Panc1 (cell line): ENCODE measurements at regions of chr5 and their contacts with region 1.

Region 1: DNA sequence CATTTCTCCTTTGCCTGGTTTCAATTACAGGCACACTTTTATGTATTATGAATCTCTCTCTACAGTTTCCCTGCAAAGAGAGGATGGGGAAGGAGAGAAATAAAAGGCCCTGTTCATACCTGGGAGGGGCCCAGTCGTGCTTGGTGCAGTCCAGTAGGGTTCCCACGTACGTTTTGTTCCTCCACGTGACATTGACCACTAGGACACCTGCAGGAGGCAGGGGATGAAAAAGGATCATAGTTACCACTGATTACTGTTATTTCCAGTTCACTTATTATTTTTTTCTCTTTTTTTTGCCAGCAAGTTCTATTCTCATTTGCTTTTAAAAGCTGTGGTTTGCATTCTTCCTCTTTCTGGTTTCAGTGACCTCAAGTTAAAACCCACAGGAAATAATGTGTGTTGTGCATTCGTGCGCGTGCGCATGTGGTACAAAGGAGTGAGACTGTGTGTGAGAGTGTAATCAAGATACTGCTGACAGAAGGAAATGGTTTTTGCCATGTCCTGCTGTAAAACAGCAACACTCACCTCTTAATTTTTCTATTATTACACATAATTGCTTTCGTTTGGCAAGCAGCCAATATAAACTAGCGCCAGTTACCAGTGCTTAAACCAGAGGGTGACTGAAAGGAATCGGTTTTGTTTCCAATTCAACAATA is 96.8 kb downstream of the ZNF608 start:
- DNase-seq: no peak
- ATAC-seq: peak; percentile 36; the same call in 1 of the 2 replicates
- H3K4me3 ChIP-seq: peak overlapping the region; percentile 11 to 23; a peak in 2 of 4 replicates
- H3K27ac ChIP-seq: peak overlapping the region; percentile 100
- H3K4me1 ChIP-seq: peaks cover 60% of the 10 kb centered on the region
- H3K27me3 ChIP-seq: no peaks in the 10 kb centered on the region
- CTCF ChIP-seq: no peak

Region 2: DNA sequence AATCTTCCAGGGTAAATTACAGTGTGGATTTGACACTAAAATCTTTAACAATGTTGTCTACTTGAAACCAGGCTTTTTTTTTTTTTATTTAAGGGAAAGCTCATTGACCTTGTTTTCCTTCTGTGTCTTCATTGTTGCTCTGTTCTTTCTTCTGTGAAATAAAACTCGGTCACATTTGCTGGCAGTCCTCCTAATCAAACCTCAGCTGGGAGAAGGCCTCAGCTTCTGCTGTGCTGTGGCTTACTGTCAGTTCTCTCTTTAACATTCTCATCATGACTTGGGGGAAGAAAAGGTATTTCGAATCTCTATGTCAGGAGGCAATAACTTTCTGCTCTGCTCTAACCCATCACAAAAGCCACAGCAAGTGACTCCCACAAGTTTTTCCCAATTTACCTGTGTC is 172.0 kb before region 1 on chr5:
- CTCF ChIA-PET with region 1: no interaction called
- POLR2A ChIA-PET with region 1: interaction called, 13 read pairs
- in situ Hi-C with region 1: no loop called
- intact Hi-C with region 1: no loop called
- DNase-seq: no peak
- ATAC-seq: no peak
- H3K4me3 ChIP-seq: no peak overlapping the region
- H3K27ac ChIP-seq: peak overlapping the region; percentile 23; the same call in 1 of the 2 replicates
- H3K4me1 ChIP-seq: no peaks in the 10 kb centered on the region
- H3K27me3 ChIP-seq: no peaks in the 10 kb centered on the region
- CTCF ChIP-seq: no peak

Region 3: DNA sequence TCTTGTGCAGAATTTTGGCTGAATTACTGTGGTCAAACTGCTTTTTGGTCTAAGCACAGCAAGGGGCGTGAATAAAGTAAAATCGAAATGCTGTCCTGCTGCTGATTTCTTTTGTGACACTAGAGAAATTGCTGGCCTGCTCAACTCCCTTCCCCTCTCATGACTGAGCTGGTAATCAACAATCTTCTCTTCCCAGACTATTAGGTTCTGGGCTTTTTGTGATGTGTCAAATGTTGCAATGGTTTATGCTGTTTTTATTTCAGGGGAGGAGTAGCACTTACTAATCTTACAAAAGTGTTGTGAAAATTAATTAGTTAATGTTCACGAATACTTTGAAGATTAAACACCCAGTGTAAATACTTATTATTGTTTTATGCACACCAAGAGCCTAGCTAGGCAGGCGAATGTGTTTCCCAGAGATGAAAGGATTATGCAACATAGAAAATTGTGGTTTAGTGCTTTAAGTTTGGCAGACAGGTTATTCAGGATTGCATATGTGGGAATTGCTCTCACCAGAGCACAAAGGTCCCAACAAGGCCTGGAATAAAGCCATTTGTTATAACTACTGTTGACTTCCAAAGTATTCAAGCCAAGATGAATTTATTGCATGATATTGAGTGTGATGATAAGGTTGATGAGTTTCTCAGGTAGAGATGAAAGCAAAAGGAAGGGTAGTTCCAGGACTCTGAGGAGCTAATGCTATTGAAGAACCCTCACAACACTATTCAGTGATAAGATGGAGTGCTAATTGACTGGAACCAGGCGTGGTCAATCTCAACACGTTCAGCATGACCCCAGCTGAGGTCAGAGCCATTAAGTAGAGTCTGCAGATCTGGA is 377.5 kb after region 1 on chr5:
- CTCF ChIA-PET with region 1: no interaction called
- POLR2A ChIA-PET with region 1: no interaction called
- in situ Hi-C with region 1: no loop called
- intact Hi-C with region 1: no loop called
- DNase-seq: no peak
- ATAC-seq: no peak
- H3K4me3 ChIP-seq: no peak overlapping the region
- H3K27ac ChIP-seq: no peak overlapping the region; the same call in 1 of the 2 replicates
- H3K4me1 ChIP-seq: no peaks in the 10 kb centered on the region
- H3K27me3 ChIP-seq: no peaks in the 10 kb centered on the region
- CTCF ChIP-seq: no peak